ENCODE measurements at regions of chr6 and their contacts with region 1.

Region 1: DNA sequence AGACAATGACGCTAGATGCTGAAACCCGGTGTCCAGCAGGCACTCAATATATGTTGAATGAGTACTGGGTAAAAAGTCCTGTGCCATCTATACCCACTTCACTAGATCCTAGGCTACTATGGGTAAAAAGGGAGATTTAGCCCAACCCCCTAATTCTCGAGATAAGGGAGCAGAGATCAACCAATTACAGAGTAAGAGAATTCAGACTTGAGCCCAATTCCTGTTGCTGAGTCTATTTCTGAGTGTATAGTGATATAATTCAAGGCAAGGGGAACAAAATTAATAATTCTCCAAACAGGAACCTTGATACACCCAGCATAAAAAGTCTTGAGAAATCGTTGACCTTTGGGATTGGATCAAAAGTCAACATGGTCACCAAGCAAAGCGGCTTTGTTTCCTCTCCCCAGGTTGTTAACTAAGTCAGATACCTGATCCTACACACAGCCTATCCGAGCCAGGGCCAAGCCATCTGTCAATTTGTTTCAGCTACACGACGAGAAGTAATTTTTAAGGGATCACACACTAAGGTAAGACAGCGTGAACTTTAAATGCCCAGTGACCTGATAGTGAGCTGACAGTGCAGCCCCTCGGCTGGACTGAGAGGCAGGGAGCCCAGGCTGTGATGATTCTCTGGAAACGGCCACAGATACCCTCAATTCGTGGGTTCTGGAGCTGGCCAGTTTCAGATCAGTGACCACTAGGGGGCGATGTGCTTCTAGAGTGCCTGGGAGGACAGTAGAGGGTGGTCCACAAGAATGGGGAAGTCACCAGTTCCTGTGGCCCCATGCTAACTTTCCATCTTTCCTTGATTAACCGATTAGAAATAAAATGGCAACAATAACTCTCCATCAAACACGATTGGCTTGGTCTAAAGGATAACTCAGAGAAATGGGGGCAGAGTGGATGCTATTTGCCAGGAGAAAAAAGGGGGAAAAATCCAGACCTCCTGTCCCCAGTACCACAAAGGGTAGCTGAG is 46.2 kb downstream of the SLC22A23 start:
- DNase-seq: peak in 2 of 5 donors; percentile 42 to 47
- H3K4me3 ChIP-seq: no peak overlapping the region
- H3K27ac ChIP-seq: no peak overlapping the region
- H3K4me1 ChIP-seq: no peaks in the 10 kb centered on the region
- H3K27me3 ChIP-seq: no peaks in the 10 kb centered on the region
- CTCF ChIP-seq: no peak
- EP300 ChIP-seq: no peak
- POLR2A ChIP-seq: no peak

Region 2: GRCh38 chr6:3309391-3310050 is 101.2 kb before region 1 on chr6:
- intact Hi-C with region 1: loop called in 1 of 4 experiments (anchors 10 kb)
- DNase-seq: no peak
- H3K4me3 ChIP-seq: no peak overlapping the region
- H3K27ac ChIP-seq: no peak overlapping the region
- H3K4me1 ChIP-seq: no peaks in the 10 kb centered on the region
- H3K27me3 ChIP-seq: no peaks in the 10 kb centered on the region
- CTCF ChIP-seq: no peak
- EP300 ChIP-seq: no peak
- POLR2A ChIP-seq: no peak

Measured in ovary (tissue), 10 donors.